Upper lobe of right lung (tissue), 1 donor: ENCODE measurements at regions of chr2 and their contacts with region 1.

Region 1: DNA sequence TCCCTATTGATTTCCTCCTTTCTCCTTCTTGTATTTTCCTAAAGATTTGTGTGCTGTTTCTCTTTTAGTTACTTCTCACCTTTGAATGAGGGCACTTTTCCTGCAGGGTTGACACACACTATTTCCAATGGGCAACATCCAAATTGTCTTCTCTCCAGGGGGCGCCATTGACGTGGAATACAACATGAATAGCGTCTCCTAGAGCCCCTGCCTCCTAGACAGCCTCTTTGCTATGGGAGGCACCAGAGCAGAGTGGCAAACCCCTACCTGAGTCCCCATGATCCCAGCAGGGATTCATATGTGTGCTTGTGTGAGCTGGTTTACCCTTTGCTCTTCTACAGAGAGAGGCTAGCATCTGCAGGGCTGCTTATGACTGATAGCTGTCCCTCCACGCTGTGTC is 61.3 kb upstream of the ITSN2 start:
- DNase-seq: no peak
- ATAC-seq: peak; percentile 91
- H3K4me3 ChIP-seq: no peak overlapping the region
- H3K27ac ChIP-seq: no peak overlapping the region
- H3K4me1 ChIP-seq: no peaks in the 10 kb centered on the region
- H3K27me3 ChIP-seq: no peaks in the 10 kb centered on the region
- CTCF ChIP-seq: peak; percentile 65

Region 2: GRCh38 chr2:24682304-24682703 is 260.6 kb after region 1 on chr2:
- intact Hi-C with region 1: no loop called
- DNase-seq: no peak
- ATAC-seq: no peak
- H3K4me3 ChIP-seq: no peak overlapping the region
- H3K27ac ChIP-seq: no peak overlapping the region
- H3K4me1 ChIP-seq: no peaks in the 10 kb centered on the region
- H3K27me3 ChIP-seq: no peaks in the 10 kb centered on the region
- CTCF ChIP-seq: no peak

Region 3: GRCh38 chr2:24827321-24828237 is 405.9 kb after region 1 on chr2:
- intact Hi-C with region 1: loop called (anchors 10 kb)
- DNase-seq: peak; percentile 74
- ATAC-seq: peak; percentile 92
- H3K4me3 ChIP-seq: no peak overlapping the region
- H3K27ac ChIP-seq: no peak overlapping the region
- H3K4me1 ChIP-seq: peaks cover 15% of the 10 kb centered on the region
- H3K27me3 ChIP-seq: no peaks in the 10 kb centered on the region
- CTCF ChIP-seq: peak; percentile 93

Region 4: DNA sequence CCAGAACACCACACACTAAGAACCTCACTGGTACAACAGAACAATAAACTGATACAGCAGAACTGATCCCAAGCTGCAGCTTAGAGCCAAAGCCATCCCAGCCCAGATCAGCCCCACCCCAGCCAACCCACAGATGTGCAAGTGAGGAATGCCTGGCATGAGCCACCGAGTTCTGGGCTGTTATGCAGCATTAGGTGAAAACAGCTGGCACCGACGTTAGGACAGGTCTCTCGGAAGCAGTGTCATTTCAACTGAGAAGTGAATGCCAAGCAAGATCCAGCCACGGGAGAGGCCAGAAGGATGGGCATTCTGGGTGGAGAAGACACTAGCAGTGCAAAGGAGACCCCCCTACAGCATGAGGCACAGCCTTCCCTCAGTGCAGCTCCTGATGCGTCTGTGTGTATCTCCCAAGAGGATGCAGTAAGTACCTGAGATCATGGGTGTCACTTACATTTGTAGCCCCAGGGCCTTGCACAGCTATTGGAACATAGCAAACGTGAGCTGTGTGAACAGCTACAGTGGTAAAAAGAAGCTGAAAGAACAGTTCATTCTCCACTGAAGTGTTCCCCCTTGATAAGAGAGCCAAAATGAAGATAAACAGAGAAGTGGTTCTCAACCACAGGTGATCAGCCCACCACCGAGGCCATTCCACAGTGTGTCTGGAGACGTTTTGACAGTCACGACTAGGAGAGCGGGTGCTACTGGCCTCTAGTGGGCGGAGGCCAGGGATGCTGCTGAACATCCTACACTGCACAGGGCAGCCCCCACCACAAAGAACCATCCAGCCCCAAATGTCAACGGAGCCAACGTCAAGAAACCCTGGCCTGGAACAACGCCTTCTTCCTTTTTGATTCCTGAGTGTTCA is 459.7 kb after region 1 on chr2:
- intact Hi-C with region 1: no loop called
- DNase-seq: no peak
- ATAC-seq: no peak
- H3K4me3 ChIP-seq: no peak overlapping the region
- H3K27ac ChIP-seq: no peak overlapping the region
- H3K4me1 ChIP-seq: peaks cover 3% of the 10 kb centered on the region
- H3K27me3 ChIP-seq: no peaks in the 10 kb centered on the region
- CTCF ChIP-seq: no peak